ENCODE measurements at regions of chr17 and their contacts with region 1.

Region 1: DNA sequence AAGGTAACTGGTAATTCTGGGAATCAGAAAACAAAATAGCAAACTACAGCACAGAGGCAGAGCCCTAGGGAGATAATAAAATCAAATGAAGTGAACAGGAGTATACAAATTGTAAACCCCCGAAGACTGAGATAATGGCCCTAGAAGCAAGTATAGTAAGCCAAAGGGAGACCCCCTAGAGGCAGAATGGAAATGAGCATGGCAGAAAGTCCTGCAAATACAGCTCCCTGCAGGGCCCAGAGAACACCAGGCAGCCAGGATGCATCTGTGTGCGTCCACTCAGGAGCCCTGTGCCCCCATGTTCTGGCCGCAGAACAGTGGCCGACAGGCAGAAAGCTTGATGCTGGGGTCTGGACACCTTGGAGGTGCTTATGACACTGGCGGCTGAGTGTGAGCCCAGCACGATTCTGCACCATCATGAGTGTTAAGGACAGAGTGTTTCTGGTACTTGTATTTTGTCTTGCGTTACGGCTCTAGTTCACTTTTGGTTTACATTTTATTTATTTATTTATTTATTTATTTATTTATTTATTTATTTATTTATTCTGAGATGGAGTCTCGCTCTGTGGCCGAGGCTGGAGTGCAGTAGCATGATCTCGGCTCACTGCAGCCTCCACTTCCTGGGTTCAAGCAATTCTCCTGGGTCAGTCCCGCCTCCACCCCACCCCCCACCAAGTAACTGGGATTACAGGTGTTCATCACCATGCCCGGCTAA is 48.7 kb downstream of the RGS9 start:
- DNase-seq: no peak
- ATAC-seq: no peak
- H3K4me3 ChIP-seq: no peak overlapping the region
- H3K27ac ChIP-seq: no peak overlapping the region
- H3K4me1 ChIP-seq: peaks cover 0 to 19% (median 0%) of the 10 kb centered on the region in 9 donors
- H3K27me3 ChIP-seq: peaks cover 0 to 42% (median 4%) of the 10 kb centered on the region in 7 donors
- CTCF ChIP-seq: no peak

Region 2: GRCh38 chr17:64938925-64939474 is 246.8 kb before region 1 on chr17:
- intact Hi-C with region 1: loop called in 4 of 10 experiments (anchors 5 to 10 kb)
- DNase-seq: peak; percentile 29 to 48
- ATAC-seq: peak in 6 of 8 donors; percentile 38 to 82 (median 63)
- H3K4me3 ChIP-seq: peak overlapping the region in 1 of 10 donors; percentile 20
- H3K27ac ChIP-seq: no peak overlapping the region
- H3K4me1 ChIP-seq: no peaks in the 10 kb centered on the region
- H3K27me3 ChIP-seq: no peaks in the 10 kb centered on the region
- CTCF ChIP-seq: peak in 8 of 9 donors; percentile 10 to 79 (median 50)

Region 3: GRCh38 chr17:65137021-65137991 is 48.5 kb before region 1 on chr17 and contains the start of gene RGS9:
- intact Hi-C with region 1: no loop called
- DNase-seq: peak; percentile 74 to 88
- ATAC-seq: peak; percentile 96 to 99 (median 98)
- H3K4me3 ChIP-seq: peak within 1 kb of the TSS in 9 of 10 donors; percentile 7 to 57 (median 46)
- H3K27ac ChIP-seq: peak within 1 kb of the TSS in 1 of 10 donors; percentile 14
- H3K4me1 ChIP-seq: peaks cover 0 to 12% (median 9%) of the 10 kb centered on the region in 9 donors
- H3K27me3 ChIP-seq: peaks cover 0 to 43% (median 25%) of the 10 kb centered on the region in 7 donors
- CTCF ChIP-seq: peak; percentile 93 to 99 (median 98)
- total RNA-seq, gene RGS9: 0.36 to 3.0 (median 1.1) TPM

Region 4: GRCh38 chr17:65208717-65209116 is 22.9 kb after region 1 on chr17:
- intact Hi-C with region 1: loop called in 1 of 10 experiments (anchors 2 kb)
- DNase-seq: no peak
- ATAC-seq: no peak
- H3K4me3 ChIP-seq: no peak overlapping the region
- H3K27ac ChIP-seq: no peak overlapping the region
- H3K4me1 ChIP-seq: no peaks in the 10 kb centered on the region
- H3K27me3 ChIP-seq: peaks cover 0 to 3% (median under 1%) of the 10 kb centered on the region in 7 donors
- CTCF ChIP-seq: no peak